ENCODE measurements at regions of chr7 and their contacts with region 1.

Region 1: GRCh38 chr7:151123822-151124464 is 37.7 kb downstream of the AGAP3 start:
- DNase-seq: peak; percentile 67
- ATAC-seq: peak; percentile 98
- H3K4me3 Mint-ChIP-seq: no peak overlapping the region
- H3K27ac Mint-ChIP-seq: no peak overlapping the region
- H3K4me1 Mint-ChIP-seq: peaks cover 3% of the 10 kb centered on the region
- H3K27me3 Mint-ChIP-seq: peaks cover 4% of the 10 kb centered on the region
- CTCF ChIP-seq: peak; percentile 17

Region 2: DNA sequence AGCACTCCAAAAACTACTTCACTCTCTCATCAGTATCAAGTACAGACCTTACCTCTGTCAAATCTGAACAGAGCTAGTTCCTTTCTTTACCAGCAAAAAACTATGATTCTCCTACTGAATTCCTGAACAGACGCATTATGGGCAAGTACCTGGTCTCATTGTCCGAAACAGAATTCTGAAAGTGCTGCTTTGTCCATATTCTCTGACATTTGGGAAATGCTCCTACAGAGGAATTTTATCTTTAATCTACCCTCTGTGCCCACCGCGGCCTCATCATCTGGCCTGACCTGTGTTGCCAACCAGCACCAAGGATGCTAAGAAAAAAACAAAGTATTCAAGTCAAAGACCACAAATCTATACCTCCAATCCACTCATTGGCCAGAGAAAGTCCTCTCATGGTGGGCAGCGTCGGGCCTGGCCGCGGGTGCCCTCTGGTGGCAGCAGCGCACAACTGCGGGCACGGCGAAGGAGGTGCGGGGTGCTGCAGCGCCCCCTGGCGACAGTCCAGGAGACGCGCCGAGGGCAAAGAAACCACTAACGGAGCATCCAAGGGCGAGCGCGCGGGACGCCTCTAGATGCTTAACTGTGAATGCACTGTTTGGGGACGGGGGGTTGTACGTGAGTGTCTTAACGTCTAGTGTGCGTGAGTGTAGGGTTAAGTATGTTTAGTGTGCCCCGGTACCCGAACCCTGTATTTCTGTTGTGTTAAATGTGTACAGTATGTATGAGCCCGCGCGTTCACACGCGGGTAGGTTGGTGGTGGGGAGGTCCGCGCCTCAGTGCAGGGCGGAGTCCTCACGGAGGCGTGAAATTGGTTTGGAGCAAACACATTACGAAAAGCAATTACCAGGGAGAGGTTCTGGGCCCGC is 48.6 kb after region 1 on chr7:
- CTCF ChIA-PET with region 1: interaction called, 12 read pairs
- POLR2A ChIA-PET with region 1: no interaction called
- intact Hi-C with region 1: loop called (anchors 1 kb)
- DNase-seq: peak; percentile 72
- ATAC-seq: peak; percentile 86
- H3K4me3 Mint-ChIP-seq: no peak overlapping the region
- H3K27ac Mint-ChIP-seq: no peak overlapping the region
- H3K4me1 Mint-ChIP-seq: peaks cover 6% of the 10 kb centered on the region
- H3K27me3 Mint-ChIP-seq: peaks cover 56% of the 10 kb centered on the region
- CTCF ChIP-seq: peak; percentile 100

Region 3: DNA sequence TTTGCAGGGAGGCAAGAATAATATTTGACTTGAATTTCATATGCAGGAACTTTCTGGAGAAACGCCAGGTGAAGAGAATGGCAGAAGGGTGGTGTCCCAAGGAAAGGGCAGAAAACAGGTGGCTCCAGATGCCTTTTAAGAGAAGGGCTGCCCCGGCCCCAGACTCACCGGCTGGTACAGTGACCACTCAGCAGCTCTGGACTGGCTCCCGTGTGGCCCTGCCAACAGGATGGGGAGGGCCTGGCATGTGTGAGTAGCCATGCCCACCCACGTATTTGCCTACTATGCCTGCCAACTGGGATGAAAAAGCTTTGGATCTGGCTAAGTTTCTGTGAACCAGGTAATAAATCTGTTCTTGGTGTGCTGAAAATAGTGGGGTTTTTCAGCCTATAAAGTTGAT is 593.5 kb after region 1 on chr7:
- CTCF ChIA-PET with region 1: no interaction called
- POLR2A ChIA-PET with region 1: no interaction called
- intact Hi-C with region 1: no loop called
- DNase-seq: no peak
- ATAC-seq: no peak
- H3K4me3 Mint-ChIP-seq: no peak overlapping the region
- H3K27ac Mint-ChIP-seq: no peak overlapping the region
- H3K4me1 Mint-ChIP-seq: peaks cover 13% of the 10 kb centered on the region
- H3K27me3 Mint-ChIP-seq: no peaks in the 10 kb centered on the region
- CTCF ChIP-seq: no peak

Measured in activated B cell treated with CpG ODN at 0.5 μM for 24 hours (primary cell).